Endothelial cell of umbilical vein (primary cell): ENCODE measurements at regions of chr12 and their contacts with region 1.

Region 1: GRCh38 chr12:93279565-93280412 is 97.9 kb upstream of the NUDT4 start:
- DNase-seq: peak; percentile 88
- H3K4me3 ChIP-seq: no peak overlapping the region
- H3K27ac ChIP-seq: no peak overlapping the region
- H3K4me1 ChIP-seq: no peaks in the 10 kb centered on the region
- H3K27me3 ChIP-seq: no peaks in the 10 kb centered on the region
- CTCF ChIP-seq: no peak
- POLR2A ChIP-seq: no peak

Region 2: GRCh38 chr12:93098077-93098476 is 181.7 kb before region 1 on chr12:
- CTCF ChIA-PET with region 1: no interaction called
- POLR2A ChIA-PET with region 1: no interaction called
- dilution Hi-C with region 1: no loop called
- intact Hi-C with region 1: loop called (anchors 5 kb)
- DNase-seq: peak; percentile 53
- H3K4me3 ChIP-seq: no peak overlapping the region
- H3K27ac ChIP-seq: no peak overlapping the region
- H3K4me1 ChIP-seq: no peaks in the 10 kb centered on the region
- H3K27me3 ChIP-seq: no peaks in the 10 kb centered on the region
- CTCF ChIP-seq: peak; percentile 21 to 22
- POLR2A ChIP-seq: no peak